ENCODE measurements at regions of chr5 and their contacts with region 1.

Region 1: DNA sequence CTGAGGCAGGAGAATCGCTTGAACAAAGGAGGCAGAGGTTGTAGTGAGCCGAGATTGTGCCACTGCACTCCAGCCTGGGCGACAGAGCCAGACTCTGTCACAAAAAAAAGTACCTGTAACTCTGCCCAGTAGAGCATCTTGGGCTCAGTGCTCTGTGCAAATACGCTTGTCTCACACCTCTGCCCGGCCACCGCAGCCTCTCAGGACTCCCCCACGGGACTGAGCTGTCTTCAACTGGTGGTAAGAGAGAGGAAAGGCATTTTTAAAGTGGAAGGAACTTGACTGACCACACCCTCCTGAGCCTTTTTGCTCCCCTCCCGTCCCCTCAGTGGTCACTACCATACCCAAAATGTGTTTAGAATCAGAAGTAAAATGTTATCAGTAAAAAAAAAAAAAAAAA is 174.3 kb upstream of the PIK3R1 start:
- DNase-seq: peak; percentile 44 to 65 (median 60)
- H3K4me3 ChIP-seq: no peak overlapping the region
- H3K4me3 Mint-ChIP-seq: peak overlapping the region in 1 of 2 donors; percentile 63
- H3K27ac ChIP-seq: peak overlapping the region; percentile 29 to 82
- H3K27ac Mint-ChIP-seq: peak overlapping the region; percentile 81 to 94 (median 92)
- H3K4me1 ChIP-seq: peaks cover 48 to 50% of the 10 kb centered on the region in 2 donors
- H3K4me1 Mint-ChIP-seq: peaks cover 53% of the 10 kb centered on the region
- H3K27me3 ChIP-seq: no peaks in the 10 kb centered on the region
- H3K27me3 Mint-ChIP-seq: peaks cover 0 to 3% (median 2%) of the 10 kb centered on the region in 3 donors
- CTCF ChIP-seq: no peak

Region 2: DNA sequence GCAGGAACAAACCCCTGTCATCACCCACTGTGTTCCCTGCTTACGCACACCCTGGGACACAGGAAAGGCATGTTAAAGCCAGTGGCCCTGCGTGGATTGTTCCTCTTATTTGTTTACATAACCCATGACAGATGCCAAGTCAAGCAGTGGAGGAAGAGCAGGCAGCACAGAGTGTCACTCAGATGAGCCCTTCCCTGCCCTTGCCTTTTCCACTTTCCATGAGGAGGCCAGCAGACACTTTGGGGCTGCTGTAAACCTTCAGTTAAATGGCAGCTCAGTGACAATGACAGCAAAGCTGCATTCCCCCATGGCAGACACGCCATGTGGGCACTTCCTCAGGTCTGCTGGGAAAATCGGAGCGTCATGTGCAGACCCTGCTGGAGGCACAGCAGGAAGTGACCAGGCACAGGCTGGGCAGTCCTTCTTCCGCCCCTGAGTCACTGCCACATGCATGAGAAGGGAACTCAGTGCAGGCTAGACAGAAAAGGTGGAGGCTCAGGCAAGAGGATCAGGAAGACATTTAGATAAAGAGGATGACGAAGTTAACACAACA is 42.5 kb before region 1 on chr5:
- intact Hi-C with region 1: loop called in 1 of 2 experiments (anchors 10 kb)
- DNase-seq: peak; percentile 90 to 99 (median 99)
- H3K4me3 ChIP-seq: peak overlapping the region in 2 of 3 experiments; percentile 12 to 29
- H3K4me3 Mint-ChIP-seq: peak overlapping the region; percentile 34 to 68
- H3K27ac ChIP-seq: peak overlapping the region; percentile 76 to 88
- H3K27ac Mint-ChIP-seq: peak overlapping the region; percentile 72 to 100 (median 95)
- H3K4me1 ChIP-seq: peaks cover 20 to 21% of the 10 kb centered on the region in 2 donors
- H3K4me1 Mint-ChIP-seq: peaks cover 18% of the 10 kb centered on the region
- H3K27me3 ChIP-seq: no peaks in the 10 kb centered on the region
- H3K27me3 Mint-ChIP-seq: peaks cover 0 to 4% (median 0%) of the 10 kb centered on the region in 3 donors
- CTCF ChIP-seq: no peak

Region 3: GRCh38 chr5:68225188-68225910 is 184.1 kb after region 1 on chr5:
- intact Hi-C with region 1: loop called in 1 of 2 experiments (anchors 10 kb)
- DNase-seq: peak; percentile 67 to 86 (median 83)
- H3K4me3 ChIP-seq: peak overlapping the region in 1 of 3 experiments; percentile 7
- H3K4me3 Mint-ChIP-seq: peak overlapping the region; percentile 0 to 36
- H3K27ac ChIP-seq: peak overlapping the region in 1 of 2 donors; percentile 65
- H3K27ac Mint-ChIP-seq: peak overlapping the region; percentile 69 to 82 (median 77)
- H3K4me1 ChIP-seq: peaks cover 31 to 36% of the 10 kb centered on the region in 2 donors
- H3K4me1 Mint-ChIP-seq: peaks cover 55% of the 10 kb centered on the region
- H3K27me3 ChIP-seq: no peaks in the 10 kb centered on the region
- H3K27me3 Mint-ChIP-seq: peaks cover 0 to 1% (median 0%) of the 10 kb centered on the region in 3 donors
- CTCF ChIP-seq: no peak

Region 4: GRCh38 chr5:68285851-68286611 is 244.7 kb after region 1 on chr5:
- intact Hi-C with region 1: no loop called
- DNase-seq: peak; percentile 45 to 70 (median 65)
- H3K4me3 ChIP-seq: no peak overlapping the region
- H3K4me3 Mint-ChIP-seq: no peak overlapping the region
- H3K27ac ChIP-seq: peak overlapping the region in 1 of 2 donors; percentile 69
- H3K27ac Mint-ChIP-seq: peak overlapping the region; percentile 56 to 87 (median 74)
- H3K4me1 ChIP-seq: peaks cover 18 to 24% of the 10 kb centered on the region in 2 donors
- H3K4me1 Mint-ChIP-seq: peaks cover 30% of the 10 kb centered on the region
- H3K27me3 ChIP-seq: no peaks in the 10 kb centered on the region
- H3K27me3 Mint-ChIP-seq: no peaks in the 10 kb centered on the region
- CTCF ChIP-seq: peak; percentile 87